ENCODE measurements at regions of chr14 and their contacts with region 1.

Region 1: GRCh38 chr14:28744126-28744525 is 22.5 kb upstream of the FOXG1 start:
- DNase-seq: no peak
- H3K4me3 ChIP-seq: no peak overlapping the region
- H3K27ac ChIP-seq: no peak overlapping the region
- H3K4me1 ChIP-seq: no peaks in the 10 kb centered on the region
- H3K27me3 ChIP-seq: no peaks in the 10 kb centered on the region
- CTCF ChIP-seq: no peak
- EP300 ChIP-seq: no peak
- POLR2A ChIP-seq: no peak

Region 2: GRCh38 chr14:28707814-28708213 is 36.3 kb before region 1 on chr14:
- in situ Hi-C with region 1: no loop called
- intact Hi-C with region 1: no loop called
- DNase-seq: no peak
- H3K4me3 ChIP-seq: no peak overlapping the region
- H3K27ac ChIP-seq: no peak overlapping the region
- H3K4me1 ChIP-seq: no peaks in the 10 kb centered on the region
- H3K27me3 ChIP-seq: no peaks in the 10 kb centered on the region
- CTCF ChIP-seq: no peak
- EP300 ChIP-seq: no peak
- POLR2A ChIP-seq: no peak

Region 3: DNA sequence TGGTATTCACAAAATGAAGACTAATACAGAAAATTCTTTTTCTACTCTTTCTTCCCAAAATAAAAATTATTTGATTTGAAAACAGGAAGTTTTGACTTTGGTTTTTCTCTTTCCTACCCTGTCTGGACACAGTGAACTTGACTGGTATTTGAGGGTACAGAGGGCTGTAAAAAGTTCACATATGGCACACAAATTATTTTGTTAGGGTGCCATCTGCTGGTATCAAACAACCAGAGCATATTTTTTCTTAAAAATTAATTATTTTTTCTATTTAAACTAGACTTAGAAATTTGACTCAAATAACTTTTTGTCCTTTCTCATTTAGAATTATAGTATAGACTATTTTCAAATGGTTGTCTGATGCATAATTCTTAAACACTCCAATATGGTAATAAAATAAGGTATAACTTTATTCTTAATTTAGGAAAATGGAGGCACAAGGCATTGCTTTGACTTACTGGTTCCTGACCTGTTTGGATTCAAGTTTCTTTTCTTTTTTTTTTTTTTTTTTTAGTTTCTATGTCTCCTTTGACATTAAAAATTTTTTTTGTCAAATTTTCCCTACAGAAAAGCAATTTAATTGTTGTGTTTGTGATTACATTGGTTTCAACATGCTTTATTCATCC is 792.9 kb after region 1 on chr14:
- in situ Hi-C with region 1: loop called in 1 of 4 experiments (anchors 10 kb)
- intact Hi-C with region 1: no loop called
- DNase-seq: no peak
- H3K4me3 ChIP-seq: no peak overlapping the region
- H3K27ac ChIP-seq: no peak overlapping the region
- H3K4me1 ChIP-seq: no peaks in the 10 kb centered on the region
- H3K27me3 ChIP-seq: no peaks in the 10 kb centered on the region
- CTCF ChIP-seq: peak in 3 of 5 experiments; percentile 8 to 32 (median 19)
- EP300 ChIP-seq: no peak
- POLR2A ChIP-seq: no peak